ENCODE measurements at regions of chr17 and their contacts with region 1.

Region 1: DNA sequence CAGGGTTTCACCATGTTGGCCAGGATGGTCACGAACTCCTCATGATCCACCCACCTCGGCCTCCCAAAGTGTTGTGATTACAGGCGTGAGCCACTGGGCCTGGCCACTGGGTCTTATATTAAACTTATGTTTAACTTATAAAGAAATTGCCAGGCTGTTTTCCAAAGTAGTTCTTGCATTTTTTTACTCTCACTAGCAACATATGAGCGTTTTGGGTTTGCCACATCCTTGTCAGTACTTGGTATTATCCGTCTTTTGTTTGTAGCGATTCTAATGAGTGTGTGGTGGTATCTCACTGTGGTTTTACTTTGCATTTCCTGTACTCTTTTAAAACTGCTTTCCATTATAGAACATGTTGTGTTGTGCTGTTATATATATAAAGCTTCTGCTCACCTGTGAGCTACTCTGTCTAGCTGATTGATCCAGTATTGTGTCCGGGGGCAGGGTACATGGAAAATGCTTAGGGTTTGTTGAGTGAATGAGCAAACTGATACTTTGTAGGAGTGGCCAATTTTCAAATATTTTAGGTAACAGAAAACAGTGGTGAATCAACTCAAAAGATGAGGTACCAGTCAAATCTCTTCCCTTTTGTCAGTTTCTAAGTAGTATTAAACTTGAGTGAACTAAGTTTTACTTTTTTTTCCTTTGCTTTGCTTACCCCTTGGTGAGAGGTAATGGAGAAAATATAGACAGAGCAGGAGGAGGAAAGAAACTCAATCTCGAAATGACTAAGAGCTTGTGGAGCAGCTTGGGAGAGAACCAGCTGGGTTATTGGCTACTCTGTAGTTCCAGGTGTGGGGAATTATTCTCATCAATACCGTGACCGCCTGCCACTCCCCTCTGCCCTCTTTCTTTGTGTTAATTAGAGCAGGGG is 75.8 kb downstream of the PITPNC1 start:
- DNase-seq: peak in 1 of 2 donors; percentile 81
- ATAC-seq: peak; percentile 68 to 83 (median 82)
- H3K4me3 ChIP-seq: no peak overlapping the region
- H3K4me3 Mint-ChIP-seq: peak overlapping the region; percentile 82
- H3K27ac ChIP-seq: peak overlapping the region; percentile 92
- H3K27ac Mint-ChIP-seq: peak overlapping the region; percentile 97
- H3K4me1 ChIP-seq: peaks cover 72% of the 10 kb centered on the region
- H3K4me1 Mint-ChIP-seq: peaks cover 88 to 93% of the 10 kb centered on the region in 2 donors
- H3K27me3 ChIP-seq: no peaks in the 10 kb centered on the region
- H3K27me3 Mint-ChIP-seq: no peaks in the 10 kb centered on the region
- CTCF ChIP-seq: no peak

Region 2: DNA sequence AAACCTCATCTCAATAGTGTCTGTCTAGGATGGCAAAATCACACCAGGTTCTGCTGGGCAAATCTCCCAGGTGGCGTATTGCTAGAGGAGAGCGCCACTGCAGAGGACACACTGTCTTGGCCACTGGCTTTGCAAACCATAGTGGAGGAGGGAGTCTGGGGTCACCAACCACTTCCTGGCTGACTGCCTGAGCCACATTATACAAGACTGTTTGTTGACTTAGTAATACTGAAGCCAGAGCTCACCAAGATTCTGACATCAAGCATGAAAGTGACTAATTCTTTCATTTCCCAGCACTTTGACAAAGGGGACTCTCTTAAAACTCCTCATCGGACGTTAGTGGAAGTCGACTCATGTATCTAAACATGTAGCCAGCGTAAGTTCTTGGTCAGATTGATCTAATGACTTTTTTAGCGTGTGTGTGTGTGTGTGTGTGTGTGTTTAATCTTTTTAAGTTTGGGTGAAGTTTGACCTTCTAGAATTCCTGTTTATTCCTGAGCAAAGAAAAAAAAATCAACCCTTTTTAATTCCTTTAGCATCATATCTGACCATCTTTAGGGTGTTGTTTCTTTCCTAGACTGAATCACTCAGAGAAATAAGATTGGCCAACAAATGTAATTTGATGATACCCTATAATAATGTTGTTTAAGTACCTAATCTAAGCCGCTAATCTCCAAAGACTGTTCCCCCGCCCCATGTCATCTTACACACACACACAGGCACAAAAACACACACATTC is 62.1 kb before region 1 on chr17:
- intact Hi-C with region 1: loop called (anchors 1 kb)
- DNase-seq: peak; percentile 75
- ATAC-seq: peak; percentile 77 to 92 (median 88)
- H3K4me3 ChIP-seq: peak overlapping the region; percentile 30
- H3K4me3 Mint-ChIP-seq: peak overlapping the region; percentile 89
- H3K27ac ChIP-seq: peak overlapping the region; percentile 91
- H3K27ac Mint-ChIP-seq: peak overlapping the region; percentile 96 to 99
- H3K4me1 ChIP-seq: peaks cover 82% of the 10 kb centered on the region
- H3K4me1 Mint-ChIP-seq: peaks cover 84 to 87% of the 10 kb centered on the region in 2 donors
- H3K27me3 ChIP-seq: no peaks in the 10 kb centered on the region
- H3K27me3 Mint-ChIP-seq: no peaks in the 10 kb centered on the region
- CTCF ChIP-seq: no peak

Region 3: DNA sequence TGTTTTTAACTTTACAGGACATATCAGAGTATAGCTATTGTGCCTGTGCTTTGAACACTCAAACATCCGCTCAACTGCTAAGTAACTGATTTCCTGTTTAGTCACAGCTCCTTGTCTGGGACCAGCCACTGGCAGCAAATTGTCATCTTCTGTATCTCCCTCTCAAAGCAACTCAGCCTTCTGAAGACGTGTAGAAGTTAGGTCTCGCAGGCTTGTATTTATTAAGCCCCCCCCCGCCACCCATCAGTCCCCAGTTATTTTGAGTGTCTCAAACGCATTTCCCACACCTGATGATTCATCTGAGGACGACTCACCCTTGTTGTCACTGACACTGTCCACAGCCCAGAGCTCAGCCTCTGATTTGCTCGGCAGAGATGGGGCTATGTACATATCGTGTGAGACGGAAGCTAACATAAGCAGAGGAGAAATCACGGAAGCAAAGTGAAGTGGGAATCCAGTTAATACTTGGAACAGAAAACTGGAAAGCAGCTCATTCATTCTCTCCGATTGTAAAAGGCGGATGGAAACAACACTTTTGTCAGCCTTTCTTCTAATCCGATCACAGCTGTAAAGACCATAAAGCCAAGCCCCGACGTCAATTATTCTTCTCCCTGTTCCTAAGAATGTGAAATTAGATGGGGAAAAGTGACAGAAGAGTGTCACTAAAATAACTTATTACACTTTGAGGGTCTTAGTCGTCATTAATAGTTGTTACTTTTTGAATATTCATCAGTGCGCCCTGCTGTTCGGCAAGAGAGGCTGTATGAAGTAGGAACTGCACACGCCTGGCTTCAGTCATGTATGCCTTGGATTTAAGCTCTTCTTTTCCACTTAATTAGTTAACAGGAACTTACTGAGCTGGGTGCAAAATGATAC is 11.6 kb before region 1 on chr17:
- intact Hi-C with region 1: loop called (anchors 1 kb)
- DNase-seq: peak; percentile 62 to 91
- ATAC-seq: peak; percentile 86 to 94 (median 88)
- H3K4me3 ChIP-seq: peak overlapping the region; percentile 0
- H3K4me3 Mint-ChIP-seq: peak overlapping the region; percentile 73
- H3K27ac ChIP-seq: peak overlapping the region; percentile 81
- H3K27ac Mint-ChIP-seq: peak overlapping the region; percentile 88 to 95
- H3K4me1 ChIP-seq: peaks cover 61% of the 10 kb centered on the region
- H3K4me1 Mint-ChIP-seq: peaks cover 63 to 73% of the 10 kb centered on the region in 2 donors
- H3K27me3 ChIP-seq: no peaks in the 10 kb centered on the region
- H3K27me3 Mint-ChIP-seq: no peaks in the 10 kb centered on the region
- CTCF ChIP-seq: no peak

Region 4: GRCh38 chr17:67469208-67469895 is 16.4 kb after region 1 on chr17:
- intact Hi-C with region 1: loop called (anchors 2 kb)
- DNase-seq: peak in 1 of 2 donors; percentile 54
- ATAC-seq: no peak
- H3K4me3 ChIP-seq: no peak overlapping the region
- H3K4me3 Mint-ChIP-seq: peak overlapping the region; percentile 42
- H3K27ac ChIP-seq: peak overlapping the region; percentile 8
- H3K27ac Mint-ChIP-seq: peak overlapping the region; percentile 70 to 82
- H3K4me1 ChIP-seq: peaks cover 66% of the 10 kb centered on the region
- H3K4me1 Mint-ChIP-seq: peaks cover 60 to 65% of the 10 kb centered on the region in 2 donors
- H3K27me3 ChIP-seq: no peaks in the 10 kb centered on the region
- H3K27me3 Mint-ChIP-seq: no peaks in the 10 kb centered on the region
- CTCF ChIP-seq: no peak

Region 5: GRCh38 chr17:67475236-67475937 is 22.5 kb after region 1 on chr17:
- intact Hi-C with region 1: loop called (anchors 1 kb)
- DNase-seq: peak; percentile 79 to 95
- ATAC-seq: peak; percentile 78 to 95 (median 85)
- H3K4me3 ChIP-seq: no peak overlapping the region
- H3K4me3 Mint-ChIP-seq: peak overlapping the region; percentile 65
- H3K27ac ChIP-seq: peak overlapping the region; percentile 83
- H3K27ac Mint-ChIP-seq: peak overlapping the region; percentile 89 to 94
- H3K4me1 ChIP-seq: peaks cover 66% of the 10 kb centered on the region
- H3K4me1 Mint-ChIP-seq: peaks cover 61 to 62% of the 10 kb centered on the region in 2 donors
- H3K27me3 ChIP-seq: no peaks in the 10 kb centered on the region
- H3K27me3 Mint-ChIP-seq: no peaks in the 10 kb centered on the region
- CTCF ChIP-seq: peak; percentile 91

Region 6: DNA sequence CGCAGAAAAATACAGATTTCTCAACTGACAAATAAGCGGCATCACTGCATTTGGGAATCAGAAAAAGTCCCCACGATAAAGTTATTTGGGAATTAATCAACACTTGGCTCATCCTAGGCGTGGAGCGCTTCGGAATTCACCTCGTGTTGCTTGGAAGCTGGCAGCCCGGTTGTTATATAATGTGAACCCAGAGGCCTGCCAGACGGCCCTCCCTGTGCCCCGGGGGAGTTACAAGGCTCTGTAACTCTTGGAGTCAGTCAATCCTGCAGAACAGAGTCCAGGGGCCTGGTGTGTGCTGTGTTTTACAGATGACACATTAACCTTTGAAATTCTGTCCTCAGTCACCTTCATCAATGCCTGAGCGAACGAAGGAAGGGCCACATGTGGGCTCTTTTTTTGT is 35.2 kb after region 1 on chr17:
- intact Hi-C with region 1: loop called (anchors 5 kb)
- DNase-seq: no peak
- ATAC-seq: no peak
- H3K4me3 ChIP-seq: no peak overlapping the region
- H3K4me3 Mint-ChIP-seq: peak overlapping the region; percentile 84
- H3K27ac ChIP-seq: no peak overlapping the region
- H3K27ac Mint-ChIP-seq: peak overlapping the region; percentile 86 to 93
- H3K4me1 ChIP-seq: peaks cover 70% of the 10 kb centered on the region
- H3K4me1 Mint-ChIP-seq: peaks cover 81 to 85% of the 10 kb centered on the region in 2 donors
- H3K27me3 ChIP-seq: no peaks in the 10 kb centered on the region
- H3K27me3 Mint-ChIP-seq: no peaks in the 10 kb centered on the region
- CTCF ChIP-seq: no peak